HepG2 (cell line): ENCODE measurements at regions of chr7 and their contacts with region 1.

Region 1: DNA sequence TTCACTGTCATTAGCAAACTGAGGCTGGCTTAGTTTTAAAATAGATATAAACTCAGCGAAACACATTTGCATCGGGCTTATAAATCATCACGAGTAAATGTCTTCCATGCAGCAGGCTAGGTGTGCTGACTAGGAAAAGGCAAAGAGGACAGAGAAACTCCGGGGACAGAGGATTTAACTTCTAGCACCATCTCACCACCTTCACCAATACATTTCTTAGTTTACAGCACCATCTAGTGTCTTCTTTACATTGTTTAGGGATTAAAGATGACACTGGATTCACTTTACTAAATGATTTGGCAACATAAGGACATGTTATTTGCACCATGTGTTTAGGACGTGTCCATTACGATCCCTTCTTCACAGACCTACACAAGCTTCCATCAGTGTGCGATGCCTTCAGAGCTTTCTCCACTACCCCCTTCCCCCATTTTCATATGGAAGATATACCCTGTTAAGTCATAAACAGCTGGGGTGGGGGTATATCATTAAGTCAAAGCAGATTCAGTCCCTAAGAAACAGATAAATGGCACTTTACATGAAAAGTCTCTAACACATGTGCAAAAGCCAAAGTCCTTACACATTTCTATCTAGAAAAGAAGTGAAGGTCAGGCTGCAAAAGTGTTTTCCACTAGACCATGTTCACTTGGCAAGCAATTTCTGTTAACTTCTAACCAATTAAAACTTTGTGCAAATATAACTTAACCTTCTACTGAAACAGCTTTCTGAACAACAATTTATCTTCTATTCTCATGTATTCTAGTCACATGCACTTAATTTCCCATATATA is 103.3 kb downstream of the GRB10 start:
- DNase-seq: peak; percentile 60
- ATAC-seq: peak; percentile 81
- H3K4me3 ChIP-seq: no peak overlapping the region
- H3K27ac ChIP-seq: no peak overlapping the region
- H3K4me1 ChIP-seq: peaks cover 37% of the 10 kb centered on the region
- H3K27me3 ChIP-seq: no peaks in the 10 kb centered on the region
- CTCF ChIP-seq: peak; percentile 79
- EP300 ChIP-seq: no peak
- POLR2A ChIP-seq: no peak
- RAD21 ChIP-seq: peak; percentile 57

Region 2: GRCh38 chr7:50092579-50093491 is 586.6 kb before region 1 on chr7 and contains the start of gene ZPBP:
- CTCF ChIA-PET with region 1: no interaction called
- POLR2A ChIA-PET with region 1: no interaction called
- in situ Hi-C with region 1: no loop called
- intact Hi-C with region 1: loop called (anchors 1 kb)
- DNase-seq: peak; percentile 18
- ATAC-seq: peak; percentile 50
- H3K4me3 ChIP-seq: no peak within 1 kb of the TSS
- H3K27ac ChIP-seq: no peak within 1 kb of the TSS
- H3K4me1 ChIP-seq: no peaks in the 10 kb centered on the region
- H3K27me3 ChIP-seq: no peaks in the 10 kb centered on the region
- CTCF ChIP-seq: peak; percentile 72
- EP300 ChIP-seq: no peak
- POLR2A ChIP-seq: no peak
- RAD21 ChIP-seq: peak; percentile 22; the same call in 1 of the 2 replicates
- total RNA-seq, gene ZPBP: not detected in 2 replicates

Region 3: DNA sequence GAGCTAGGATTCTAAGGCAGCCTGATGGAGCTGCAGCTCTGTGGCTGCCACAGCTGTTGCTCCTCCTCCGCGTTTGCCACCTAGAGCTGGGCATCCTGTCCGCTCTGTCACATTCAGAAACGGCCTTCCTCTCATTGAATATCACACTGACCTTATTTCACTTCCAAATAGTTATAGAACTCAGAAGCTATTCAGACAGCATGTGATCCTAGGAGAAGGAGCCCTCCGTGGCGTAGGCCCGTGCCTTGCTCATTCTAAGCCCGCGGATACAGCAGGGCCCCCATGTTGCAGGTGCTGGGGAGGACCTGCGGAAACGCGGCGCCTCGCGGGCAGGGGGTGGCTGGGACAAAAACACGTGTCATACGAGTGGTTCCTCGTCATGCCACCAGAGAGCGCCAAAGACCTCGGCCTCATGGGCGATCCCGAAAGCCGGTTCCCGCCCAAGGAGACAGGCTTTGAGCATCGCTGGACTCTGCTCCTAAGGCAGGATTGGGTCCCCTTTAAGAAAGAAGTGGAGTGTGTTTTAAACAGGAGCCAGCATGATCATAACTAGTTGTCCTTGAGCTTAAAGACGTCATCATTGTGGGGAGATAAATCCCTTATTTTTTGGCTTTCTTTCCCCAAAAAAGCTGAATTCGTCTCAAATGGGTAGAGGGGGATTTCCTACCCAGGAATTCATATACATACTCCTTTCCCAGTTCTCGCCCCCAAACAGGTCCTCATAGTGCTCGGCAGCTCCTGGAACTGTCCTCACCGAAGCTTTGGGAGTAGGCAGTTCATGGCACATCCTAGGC is 211.4 kb before region 1 on chr7:
- CTCF ChIA-PET with region 1: interaction called, 18 read pairs
- POLR2A ChIA-PET with region 1: no interaction called
- in situ Hi-C with region 1: loop called (anchors 5 kb)
- intact Hi-C with region 1: loop called (anchors 1 kb)
- DNase-seq: peak; percentile 50
- ATAC-seq: peak; percentile 90
- H3K4me3 ChIP-seq: no peak overlapping the region
- H3K27ac ChIP-seq: no peak overlapping the region
- H3K4me1 ChIP-seq: peaks cover 8% of the 10 kb centered on the region
- H3K27me3 ChIP-seq: no peaks in the 10 kb centered on the region
- CTCF ChIP-seq: peak; percentile 97
- EP300 ChIP-seq: no peak
- POLR2A ChIP-seq: no peak
- RAD21 ChIP-seq: peak; percentile 96

Region 4: DNA sequence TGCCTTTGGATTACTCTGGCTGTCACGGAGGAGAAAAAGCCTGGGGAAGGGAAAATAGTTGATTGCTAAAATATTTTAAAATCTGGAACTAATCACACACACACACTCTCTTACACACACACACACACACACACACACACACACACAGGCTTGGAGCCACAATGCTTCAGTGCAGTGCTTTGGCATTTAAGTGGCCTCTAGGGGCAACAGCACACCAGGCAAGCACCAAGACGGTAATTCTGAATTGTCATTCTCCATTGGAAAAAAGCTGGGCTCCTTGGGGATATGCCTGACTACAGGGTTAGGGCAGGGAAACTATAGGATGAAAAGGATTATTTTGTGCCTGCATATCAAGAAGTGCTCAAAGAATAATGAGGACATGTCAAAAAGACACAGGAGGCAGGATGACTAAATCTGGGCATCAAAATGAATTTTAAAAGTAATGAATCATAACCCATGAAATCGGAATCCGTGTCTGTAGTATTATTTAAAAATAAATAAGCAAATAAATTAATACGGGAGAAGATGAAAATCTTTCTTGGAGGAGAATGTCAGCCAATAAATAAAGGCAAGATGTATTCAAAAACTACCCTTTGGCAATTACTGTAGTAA is 83.8 kb before region 1 on chr7:
- CTCF ChIA-PET with region 1: no interaction called
- POLR2A ChIA-PET with region 1: no interaction called
- in situ Hi-C with region 1: no loop called
- intact Hi-C with region 1: loop called (anchors 1 kb)
- DNase-seq: peak; percentile 35
- ATAC-seq: peak; percentile 65
- H3K4me3 ChIP-seq: no peak overlapping the region
- H3K27ac ChIP-seq: peak overlapping the region; percentile 12
- H3K4me1 ChIP-seq: peaks cover 64% of the 10 kb centered on the region
- H3K27me3 ChIP-seq: no peaks in the 10 kb centered on the region
- CTCF ChIP-seq: peak; percentile 77
- EP300 ChIP-seq: no peak
- POLR2A ChIP-seq: no peak
- RAD21 ChIP-seq: peak; percentile 49

Region 5: GRCh38 chr7:50641442-50642405 is 37.7 kb before region 1 on chr7:
- CTCF ChIA-PET with region 1: no interaction called
- POLR2A ChIA-PET with region 1: no interaction called
- in situ Hi-C with region 1: no loop called
- intact Hi-C with region 1: loop called (anchors 1 kb)
- DNase-seq: peak; percentile 18
- ATAC-seq: peak; percentile 86
- H3K4me3 ChIP-seq: no peak overlapping the region
- H3K27ac ChIP-seq: no peak overlapping the region
- H3K4me1 ChIP-seq: peaks cover 16% of the 10 kb centered on the region
- H3K27me3 ChIP-seq: no peaks in the 10 kb centered on the region
- CTCF ChIP-seq: peak; percentile 66
- EP300 ChIP-seq: no peak
- POLR2A ChIP-seq: no peak
- RAD21 ChIP-seq: no peak

Region 6: DNA sequence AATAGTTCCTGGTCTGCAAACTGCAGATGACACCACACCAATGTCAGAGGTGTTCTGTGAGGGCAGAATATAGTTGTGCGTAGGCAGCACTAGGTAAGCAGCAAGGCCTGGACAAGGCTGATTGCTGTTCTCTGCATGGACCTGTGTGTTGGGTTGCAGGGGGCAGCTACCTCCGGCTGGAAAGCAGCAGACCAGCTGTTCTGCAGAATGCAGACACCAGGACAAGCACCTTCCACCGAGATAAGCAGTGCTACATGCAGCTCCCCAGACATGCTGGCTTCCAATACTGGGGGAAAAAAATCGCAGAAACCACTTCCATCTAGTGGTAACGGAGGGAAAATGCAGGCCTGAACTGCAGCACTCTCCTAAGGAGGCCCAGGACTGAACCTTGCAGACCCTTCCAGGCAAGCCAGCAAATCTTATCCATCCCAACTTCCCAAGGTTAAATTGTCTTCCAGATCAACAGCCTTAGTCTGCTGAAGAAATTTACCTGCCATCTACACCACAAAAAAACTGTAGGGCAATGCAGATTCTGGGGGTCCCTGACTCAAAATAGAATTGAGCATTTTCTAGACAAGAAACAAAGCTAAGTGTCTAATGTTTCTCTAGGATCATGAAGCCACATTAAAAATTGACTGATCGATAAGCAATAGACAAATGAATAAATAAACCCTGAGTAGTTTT is 687.7 kb after region 1 on chr7:
- CTCF ChIA-PET with region 1: no interaction called
- POLR2A ChIA-PET with region 1: no interaction called
- in situ Hi-C with region 1: no loop called
- intact Hi-C with region 1: no loop called
- DNase-seq: peak; percentile 43
- ATAC-seq: peak; percentile 96
- H3K4me3 ChIP-seq: no peak overlapping the region
- H3K27ac ChIP-seq: no peak overlapping the region
- H3K4me1 ChIP-seq: peaks cover 16% of the 10 kb centered on the region; the same call in 1 of the 2 replicates
- H3K27me3 ChIP-seq: 0 out of 5 replicates have a peak, but pooled peaks cover 0 to 1% of the 10 kb centered on the region in 2 experiments
- CTCF ChIP-seq: peak; percentile 91
- EP300 ChIP-seq: no peak
- POLR2A ChIP-seq: no peak
- RAD21 ChIP-seq: peak; percentile 80